BJ (cell line): ENCODE measurements at regions of chr3 and their contacts with region 1.

Region 1: DNA sequence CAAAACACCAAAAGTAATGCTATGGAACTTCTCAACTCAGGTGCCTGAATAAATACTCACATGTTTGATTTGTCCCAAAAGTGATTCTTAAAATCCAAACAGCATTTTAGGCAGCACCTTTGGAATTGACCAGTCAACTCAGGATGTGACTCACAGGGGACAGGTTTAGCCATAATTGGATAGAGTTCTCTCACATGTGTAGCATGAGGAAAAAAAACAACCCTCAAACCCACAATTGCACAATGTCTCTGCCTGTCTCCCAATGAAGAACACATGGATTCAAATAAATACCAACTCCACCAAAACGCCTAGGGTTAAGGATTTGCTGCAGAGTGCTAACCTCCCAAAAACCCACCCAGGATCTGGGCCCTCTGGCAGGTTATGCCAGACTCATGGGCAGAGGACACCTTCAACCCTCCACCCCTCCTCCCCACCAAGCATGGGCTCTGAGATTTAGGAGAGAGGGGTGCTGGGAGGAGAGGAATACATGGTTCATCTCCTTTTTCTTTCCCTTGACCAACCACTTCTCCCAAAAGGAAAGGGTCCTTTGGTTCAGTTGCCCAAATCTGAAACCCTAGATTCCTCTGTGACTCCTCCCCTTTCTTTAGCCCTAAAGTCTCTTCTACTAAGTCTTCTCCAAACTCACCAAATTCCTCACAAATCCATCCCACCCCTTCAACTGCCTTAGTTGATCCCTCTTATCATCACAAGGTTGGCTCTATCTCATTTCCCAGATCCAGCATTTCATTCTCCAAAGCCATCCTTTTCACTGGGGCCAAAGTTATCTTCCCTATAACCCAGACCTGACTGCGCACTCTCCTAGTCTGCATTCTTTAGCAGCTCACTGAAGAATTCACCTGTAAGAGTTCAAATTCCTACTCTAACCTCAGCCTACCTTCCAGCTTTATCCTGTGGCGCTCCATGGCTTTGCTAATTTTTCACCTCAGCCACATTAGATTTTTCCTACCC is 7.7 kb downstream of the RYK start:
- DNase-seq: peak; percentile 88
- H3K4me3 ChIP-seq: no peak overlapping the region
- H3K27me3 ChIP-seq: no peaks in the 10 kb centered on the region
- CTCF ChIP-seq: no peak

Region 2: DNA sequence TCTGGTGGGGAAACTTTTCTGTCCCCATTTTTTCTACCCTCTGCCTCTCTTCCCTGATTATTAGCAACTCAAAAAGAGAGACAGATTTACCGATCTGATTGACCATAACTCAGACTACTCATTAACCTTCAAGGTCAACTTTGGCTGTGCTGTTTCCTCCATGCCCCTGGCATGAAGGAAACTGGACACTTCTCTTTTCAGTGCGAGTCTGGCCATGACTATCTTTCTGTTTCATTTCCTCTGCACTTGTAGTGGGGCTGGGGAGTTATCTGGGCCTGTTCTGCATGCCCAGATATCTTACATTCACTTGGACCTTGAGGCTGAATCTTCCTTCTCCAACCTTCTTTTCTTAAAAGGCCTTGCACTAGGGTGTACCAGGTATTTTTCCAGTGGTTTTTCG is 136.4 kb before region 1 on chr3:
- CTCF ChIA-PET with region 1: no interaction called
- POLR2A ChIA-PET with region 1: no interaction called
- DNase-seq: no peak
- H3K4me3 ChIP-seq: no peak overlapping the region
- H3K27me3 ChIP-seq: no peaks in the 10 kb centered on the region
- CTCF ChIP-seq: no peak

Region 3: GRCh38 chr3:134222835-134223234 is 20.1 kb before region 1 on chr3:
- CTCF ChIA-PET with region 1: interaction called, 14 read pairs
- POLR2A ChIA-PET with region 1: no interaction called
- DNase-seq: no peak
- H3K4me3 ChIP-seq: no peak overlapping the region
- H3K27me3 ChIP-seq: no peaks in the 10 kb centered on the region
- CTCF ChIP-seq: no peak